ENCODE measurements at regions of chr1 and their contacts with region 1.

Region 1: DNA sequence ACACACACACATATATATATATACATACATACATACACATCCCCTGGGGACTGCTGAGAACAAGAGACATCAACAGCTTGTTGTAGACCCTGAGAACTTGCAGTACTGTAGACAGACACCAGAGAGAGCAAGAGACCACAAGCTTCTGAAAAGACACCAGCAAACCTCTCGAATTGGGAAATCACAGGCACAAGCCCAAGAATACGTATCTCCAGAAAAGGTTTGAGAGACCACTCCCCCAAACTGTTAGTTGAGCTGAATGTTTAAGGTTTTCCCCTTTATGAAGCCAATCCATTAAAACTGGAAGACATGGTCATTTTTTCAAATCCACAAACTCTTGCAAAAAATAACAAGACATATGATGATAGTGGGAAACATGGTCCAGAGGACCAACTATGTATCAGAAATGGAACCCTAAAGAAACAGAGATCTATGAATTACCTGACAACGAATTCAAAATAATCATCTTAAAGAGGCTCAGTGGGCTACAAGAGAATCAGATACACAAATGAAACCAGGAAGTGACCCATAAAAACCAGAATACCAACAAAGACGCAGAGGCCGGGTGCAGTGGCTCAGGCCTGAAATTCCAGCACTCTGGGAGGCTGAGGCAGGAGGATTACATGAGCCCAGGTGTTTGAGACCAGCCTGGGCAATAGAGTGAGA is 45.1 kb downstream of the SLC2A1 start:
- DNase-seq: peak; percentile 78
- ATAC-seq: peak; percentile 96
- H3K4me3 ChIP-seq: no peak overlapping the region
- H3K27ac ChIP-seq: no peak overlapping the region
- H3K4me1 ChIP-seq: peaks cover 0 to 3% of the 10 kb centered on the region in 2 experiments; a peak in 1 of 4 replicates
- H3K27me3 ChIP-seq: no peaks in the 10 kb centered on the region
- CTCF ChIP-seq: peak; percentile 73 to 84 (median 77)
- POLR2A ChIP-seq: no peak
- RAD21 ChIP-seq: peak; percentile 91

Region 2: DNA sequence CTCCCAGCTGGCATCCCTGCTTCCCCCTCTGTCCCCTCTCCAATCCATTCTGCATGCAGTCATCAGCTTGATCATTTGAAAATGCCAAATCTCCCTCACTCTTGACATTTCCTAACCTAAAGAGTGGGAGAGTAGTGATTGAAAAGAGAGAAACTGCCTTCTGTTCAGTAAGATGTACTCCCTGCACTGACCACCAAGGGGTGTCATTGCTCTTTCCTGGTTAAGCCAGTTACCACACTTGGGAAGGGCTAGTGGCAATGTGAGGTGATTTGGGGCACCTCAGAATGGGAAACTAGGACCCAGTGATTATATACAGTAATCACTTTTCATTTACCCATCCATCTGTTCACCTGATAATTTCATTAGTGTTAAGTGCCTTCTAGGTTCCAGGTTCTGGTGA is 135.7 kb before region 1 on chr1:
- CTCF ChIA-PET with region 1: interaction called, 9 read pairs
- POLR2A ChIA-PET with region 1: no interaction called
- RAD21 ChIA-PET with region 1: interaction called, 6 read pairs
- intact Hi-C with region 1: loop called (anchors 1 kb)
- DNase-seq: no peak
- ATAC-seq: peak; percentile 87
- H3K4me3 ChIP-seq: no peak overlapping the region
- H3K27ac ChIP-seq: no peak overlapping the region
- H3K4me1 ChIP-seq: no peaks in the 10 kb centered on the region
- H3K27me3 ChIP-seq: no peaks in the 10 kb centered on the region
- CTCF ChIP-seq: peak; percentile 61 to 90 (median 76); a peak in 5 of 6 replicates
- POLR2A ChIP-seq: no peak
- RAD21 ChIP-seq: peak; percentile 90

Region 3: DNA sequence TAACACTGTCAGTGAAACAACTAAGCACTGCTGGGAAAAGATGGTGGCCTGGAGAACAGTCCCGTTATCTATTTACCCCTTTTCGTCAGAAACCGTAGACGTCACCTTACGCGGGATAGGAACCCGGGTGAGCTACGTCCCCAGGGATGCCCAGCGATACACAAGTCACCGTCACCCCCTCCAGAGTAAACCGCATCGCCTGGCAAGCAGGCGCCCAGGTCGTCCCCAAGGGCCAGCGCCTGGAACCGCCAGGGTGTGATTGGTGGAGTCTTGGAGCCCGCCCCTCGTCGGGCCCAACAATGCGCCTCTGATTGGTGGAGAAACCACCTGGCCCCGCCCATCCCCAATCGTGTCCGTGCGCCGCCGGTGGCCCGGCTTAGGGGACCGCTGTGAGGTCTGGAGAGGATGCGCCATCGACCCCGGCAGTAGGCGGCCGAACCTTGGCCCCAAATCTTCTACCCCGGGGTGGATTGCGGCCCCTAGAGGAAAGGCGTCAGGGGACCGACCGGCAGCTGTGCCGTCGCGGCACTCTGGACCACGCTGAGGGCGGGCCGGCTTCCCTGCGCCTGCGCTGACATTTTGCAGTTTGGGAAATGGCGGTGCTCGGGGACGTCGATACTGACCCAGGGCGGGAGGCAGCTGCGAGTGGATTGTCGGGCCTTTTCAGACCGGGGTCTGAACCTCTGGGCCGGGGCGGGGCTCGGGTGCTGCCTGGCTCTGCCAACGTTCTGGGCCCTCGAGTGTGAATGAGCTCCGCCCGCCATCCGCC is 10.7 kb after region 1 on chr1:
- CTCF ChIA-PET with region 1: interaction called, 21 read pairs
- POLR2A ChIA-PET with region 1: no interaction called
- RAD21 ChIA-PET with region 1: interaction called, 3 read pairs
- intact Hi-C with region 1: no loop called
- DNase-seq: peak; percentile 82
- ATAC-seq: peak; percentile 84
- H3K4me3 ChIP-seq: peak overlapping the region; percentile 61 to 70
- H3K27ac ChIP-seq: peak overlapping the region; percentile 81
- H3K4me1 ChIP-seq: peaks cover 9 to 52% of the 10 kb centered on the region in 2 experiments; a peak in 3 of 4 replicates
- H3K27me3 ChIP-seq: no peaks in the 10 kb centered on the region
- CTCF ChIP-seq: 0 out of 6 replicates have a peak, but pooled peaks of 2 of the 3 experiments have one; percentile 21 to 24
- POLR2A ChIP-seq: peak; percentile 72
- RAD21 ChIP-seq: no peak

Region 4: GRCh38 chr1:43206600-43207228 is 293.2 kb after region 1 on chr1:
- CTCF ChIA-PET with region 1: no interaction called
- POLR2A ChIA-PET with region 1: no interaction called
- RAD21 ChIA-PET with region 1: no interaction called
- intact Hi-C with region 1: loop called (anchors 10 kb)
- DNase-seq: peak; percentile 68
- ATAC-seq: peak; percentile 96
- H3K4me3 ChIP-seq: peak overlapping the region; percentile 24 to 55
- H3K27ac ChIP-seq: peak overlapping the region; percentile 75
- H3K4me1 ChIP-seq: peaks cover 21 to 34% of the 10 kb centered on the region in 2 experiments
- H3K27me3 ChIP-seq: no peaks in the 10 kb centered on the region
- CTCF ChIP-seq: no peak
- POLR2A ChIP-seq: no peak
- RAD21 ChIP-seq: no peak; the same call in 1 of the 2 replicates

Region 5: DNA sequence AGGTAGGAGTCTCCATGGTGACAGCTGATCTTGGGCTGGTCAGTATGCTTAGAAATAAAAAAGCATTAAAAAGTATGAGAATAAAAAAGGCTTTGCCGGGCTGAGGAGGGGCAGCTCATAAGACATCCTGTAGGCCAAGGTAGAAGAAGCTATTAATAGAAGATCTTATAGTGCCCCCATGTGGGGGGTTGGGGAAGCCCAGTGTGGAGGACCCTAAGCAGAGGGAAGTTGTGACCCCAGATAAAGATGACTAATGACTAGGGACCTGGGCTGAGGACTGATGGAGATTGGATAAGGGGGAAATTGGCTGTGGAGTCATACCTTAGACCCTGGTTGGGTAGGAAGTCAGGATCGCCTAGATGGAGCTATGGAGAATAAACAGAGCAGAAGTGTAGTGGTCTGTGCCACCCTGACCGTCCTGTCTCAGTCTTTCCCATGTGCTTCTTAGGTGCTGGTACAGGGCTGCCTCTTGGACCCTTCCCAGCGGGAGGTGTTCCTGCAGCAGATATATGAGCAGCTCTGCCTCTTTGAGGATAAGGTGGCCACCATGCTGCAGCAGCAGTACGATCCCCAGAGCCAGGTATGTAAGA is 501.2 kb after region 1 on chr1:
- CTCF ChIA-PET with region 1: no interaction called
- POLR2A ChIA-PET with region 1: no interaction called
- RAD21 ChIA-PET with region 1: interaction called in 1 of 2 experiments, 3 read pairs
- intact Hi-C with region 1: loop called (anchors 10 kb)
- DNase-seq: peak; percentile 48
- ATAC-seq: peak; percentile 96
- H3K4me3 ChIP-seq: no peak overlapping the region
- H3K27ac ChIP-seq: no peak overlapping the region
- H3K4me1 ChIP-seq: no peaks in the 10 kb centered on the region
- H3K27me3 ChIP-seq: no peaks in the 10 kb centered on the region
- CTCF ChIP-seq: peak; percentile 69 to 77 (median 74); a peak in 5 of 6 replicates
- POLR2A ChIP-seq: no peak
- RAD21 ChIP-seq: peak; percentile 89

Region 6: GRCh38 chr1:43678940-43679339 is 765.4 kb after region 1 on chr1:
- CTCF ChIA-PET with region 1: no interaction called
- POLR2A ChIA-PET with region 1: no interaction called
- RAD21 ChIA-PET with region 1: no interaction called
- intact Hi-C with region 1: no loop called
- DNase-seq: no peak
- ATAC-seq: no peak
- H3K4me3 ChIP-seq: no peak overlapping the region
- H3K27ac ChIP-seq: no peak overlapping the region
- H3K4me1 ChIP-seq: no peaks in the 10 kb centered on the region
- H3K27me3 ChIP-seq: no peaks in the 10 kb centered on the region
- CTCF ChIP-seq: no peak
- POLR2A ChIP-seq: no peak
- RAD21 ChIP-seq: no peak

Measured in HCT116 (cell line).